H1 (cell line): ENCODE measurements at regions of chr7 and their contacts with region 1.

Region 1: GRCh38 chr7:139582671-139583155 is 59.2 kb downstream of the CLEC2L start:
- DNase-seq: no peak
- H3K4me3 ChIP-seq: no peak overlapping the region
- H3K27ac ChIP-seq: no peak overlapping the region
- H3K4me1 ChIP-seq: no peaks in the 10 kb centered on the region
- H3K27me3 ChIP-seq: no peaks in the 10 kb centered on the region
- CTCF ChIP-seq: no peak
- EP300 ChIP-seq: no peak
- POLR2A ChIP-seq: no peak
- RAD21 ChIP-seq: no peak

Region 2: DNA sequence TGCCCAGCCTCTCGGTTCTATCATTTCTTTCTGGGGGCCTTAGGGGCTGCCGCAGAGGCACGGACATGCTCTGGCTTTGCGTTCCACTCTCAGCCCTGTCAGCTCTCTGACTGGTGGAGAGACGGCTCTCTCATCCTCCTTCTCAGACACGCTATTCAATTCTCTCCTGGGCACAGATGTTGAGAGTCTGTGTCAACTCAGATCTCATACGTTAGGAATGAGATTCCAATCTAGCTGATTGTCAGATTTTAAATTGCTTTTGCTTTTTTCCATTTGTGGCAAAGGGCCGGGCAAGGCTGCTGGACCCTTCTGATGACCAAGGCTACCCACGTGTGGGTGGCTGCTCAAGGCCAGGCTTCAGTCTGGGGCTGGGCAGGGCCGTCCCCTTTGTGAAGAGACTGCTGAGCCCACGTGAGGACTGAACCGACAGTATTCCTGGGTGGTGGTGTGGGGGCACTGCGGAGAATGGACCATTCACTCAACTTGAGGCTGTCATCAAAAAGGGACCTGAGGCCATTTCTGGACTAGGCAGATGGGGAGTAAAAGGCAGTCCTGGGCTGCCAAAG is 12.3 kb after region 1 on chr7:
- CTCF ChIA-PET with region 1: interaction called, 51 read pairs
- POLR2A ChIA-PET with region 1: no interaction called
- DNase-seq: no peak
- H3K4me3 ChIP-seq: no peak overlapping the region
- H3K27ac ChIP-seq: no peak overlapping the region
- H3K4me1 ChIP-seq: no peaks in the 10 kb centered on the region
- H3K27me3 ChIP-seq: no peaks in the 10 kb centered on the region
- CTCF ChIP-seq: no peak
- EP300 ChIP-seq: no peak
- POLR2A ChIP-seq: no peak
- RAD21 ChIP-seq: no peak

Region 3: DNA sequence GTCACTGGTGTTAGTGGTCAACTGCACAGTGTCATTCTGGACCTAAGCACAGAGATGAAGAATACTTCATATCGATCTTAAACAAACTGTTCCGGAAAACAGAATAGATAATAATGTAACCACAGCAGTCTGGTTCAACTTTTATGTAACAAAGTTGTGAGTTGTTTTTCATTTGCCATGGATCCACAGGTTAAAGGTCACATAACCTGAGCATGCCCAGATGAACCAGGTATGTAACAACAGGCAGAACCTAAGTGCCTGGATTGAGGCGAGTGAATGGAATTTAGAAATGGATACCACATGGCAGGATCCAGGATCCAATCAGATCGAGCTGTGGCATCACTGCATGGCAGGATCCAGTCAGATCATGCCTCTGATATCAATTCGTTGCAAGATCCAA is 27.9 kb after region 1 on chr7:
- CTCF ChIA-PET with region 1: no interaction called
- POLR2A ChIA-PET with region 1: no interaction called
- DNase-seq: no peak
- H3K4me3 ChIP-seq: no peak overlapping the region
- H3K27ac ChIP-seq: no peak overlapping the region
- H3K4me1 ChIP-seq: peaks cover 3 to 15% (median 7%) of the 10 kb centered on the region in 4 experiments; a peak in 6 of 7 replicates
- H3K27me3 ChIP-seq: no peaks in the 10 kb centered on the region
- CTCF ChIP-seq: no peak
- EP300 ChIP-seq: no peak
- POLR2A ChIP-seq: no peak
- RAD21 ChIP-seq: no peak